ENCODE measurements at regions of chr10 and their contacts with region 1.

Region 1: GRCh38 chr10:32346134-32346550 is 816 bp downstream of the EPC1 start:
- DNase-seq: peak; percentile 97 to 98 (median 98)
- H3K4me3 ChIP-seq: peak overlapping the region; percentile 82 to 100
- H3K4me3 Mint-ChIP-seq: peak overlapping the region; percentile 90 to 98 (median 94)
- H3K27ac ChIP-seq: peak overlapping the region; percentile 100
- H3K27ac Mint-ChIP-seq: peak overlapping the region; percentile 99 to 100 (median 99)
- H3K4me1 ChIP-seq: peaks cover 78% of the 10 kb centered on the region
- H3K4me1 Mint-ChIP-seq: peaks cover 48 to 86% (median 65%) of the 10 kb centered on the region in 4 donors
- H3K27me3 ChIP-seq: no peaks in the 10 kb centered on the region
- H3K27me3 Mint-ChIP-seq: no peaks in the 10 kb centered on the region

Region 2: GRCh38 chr10:32055813-32056600 is 290.1 kb before region 1 on chr10 and contains the start of gene KIF5B:
- CTCF ChIA-PET with region 1: no interaction called
- POLR2A ChIA-PET with region 1: interaction called, 4 read pairs
- intact Hi-C with region 1: loop called (anchors 5 kb)
- DNase-seq: peak; percentile 81 to 92 (median 88)
- H3K4me3 ChIP-seq: peak within 1 kb of the TSS; percentile 88 to 93
- H3K4me3 Mint-ChIP-seq: peak within 1 kb of the TSS; percentile 95 to 99 (median 98)
- H3K27ac ChIP-seq: peak within 1 kb of the TSS; percentile 81
- H3K27ac Mint-ChIP-seq: peak within 1 kb of the TSS; percentile 94 to 97 (median 95)
- H3K4me1 ChIP-seq: peaks cover 49% of the 10 kb centered on the region
- H3K4me1 Mint-ChIP-seq: peaks cover 30 to 54% (median 44%) of the 10 kb centered on the region in 4 donors
- H3K27me3 ChIP-seq: no peaks in the 10 kb centered on the region
- H3K27me3 Mint-ChIP-seq: no peaks in the 10 kb centered on the region
- total RNA-seq, gene KIF5B: 54.8 to 55.6 TPM

Region 3: GRCh38 chr10:32295027-32295426 is 51.1 kb before region 1 on chr10:
- CTCF ChIA-PET with region 1: interaction called, 14 read pairs
- POLR2A ChIA-PET with region 1: interaction called, 6 read pairs
- intact Hi-C with region 1: no loop called
- DNase-seq: no peak
- H3K4me3 ChIP-seq: no peak overlapping the region
- H3K4me3 Mint-ChIP-seq: no peak overlapping the region
- H3K27ac ChIP-seq: peak overlapping the region; percentile 19
- H3K27ac Mint-ChIP-seq: peak overlapping the region in 5 of 7 donors; percentile 33 to 80 (median 62)
- H3K4me1 ChIP-seq: peaks cover 50% of the 10 kb centered on the region
- H3K4me1 Mint-ChIP-seq: peaks cover 34 to 61% (median 42%) of the 10 kb centered on the region in 4 donors
- H3K27me3 ChIP-seq: no peaks in the 10 kb centered on the region
- H3K27me3 Mint-ChIP-seq: no peaks in the 10 kb centered on the region

Region 4: GRCh38 chr10:32357056-32357735 is 11.1 kb after region 1 on chr10:
- CTCF ChIA-PET with region 1: interaction called, 5 read pairs
- POLR2A ChIA-PET with region 1: interaction called, 63 read pairs
- intact Hi-C with region 1: no loop called
- DNase-seq: peak; percentile 52 to 71 (median 64)
- H3K4me3 ChIP-seq: no peak overlapping the region
- H3K4me3 Mint-ChIP-seq: peak overlapping the region; percentile 12 to 81 (median 72)
- H3K27ac ChIP-seq: peak overlapping the region; percentile 46
- H3K27ac Mint-ChIP-seq: peak overlapping the region; percentile 79 to 94 (median 88)
- H3K4me1 ChIP-seq: peaks cover 90% of the 10 kb centered on the region
- H3K4me1 Mint-ChIP-seq: peaks cover 57 to 89% (median 70%) of the 10 kb centered on the region in 4 donors
- H3K27me3 ChIP-seq: no peaks in the 10 kb centered on the region
- H3K27me3 Mint-ChIP-seq: no peaks in the 10 kb centered on the region

Region 5: GRCh38 chr10:32433542-32433941 is 87.4 kb after region 1 on chr10:
- CTCF ChIA-PET with region 1: no interaction called
- POLR2A ChIA-PET with region 1: no interaction called
- intact Hi-C with region 1: no loop called
- DNase-seq: no peak
- H3K4me3 ChIP-seq: no peak overlapping the region
- H3K4me3 Mint-ChIP-seq: no peak overlapping the region
- H3K27ac ChIP-seq: no peak overlapping the region
- H3K27ac Mint-ChIP-seq: no peak overlapping the region
- H3K4me1 ChIP-seq: no peaks in the 10 kb centered on the region
- H3K4me1 Mint-ChIP-seq: peaks cover 3 to 6% (median 4%) of the 10 kb centered on the region in 4 donors
- H3K27me3 ChIP-seq: no peaks in the 10 kb centered on the region
- H3K27me3 Mint-ChIP-seq: peaks cover 0 to 5% of the 10 kb centered on the region in 2 donors

Region 6: DNA sequence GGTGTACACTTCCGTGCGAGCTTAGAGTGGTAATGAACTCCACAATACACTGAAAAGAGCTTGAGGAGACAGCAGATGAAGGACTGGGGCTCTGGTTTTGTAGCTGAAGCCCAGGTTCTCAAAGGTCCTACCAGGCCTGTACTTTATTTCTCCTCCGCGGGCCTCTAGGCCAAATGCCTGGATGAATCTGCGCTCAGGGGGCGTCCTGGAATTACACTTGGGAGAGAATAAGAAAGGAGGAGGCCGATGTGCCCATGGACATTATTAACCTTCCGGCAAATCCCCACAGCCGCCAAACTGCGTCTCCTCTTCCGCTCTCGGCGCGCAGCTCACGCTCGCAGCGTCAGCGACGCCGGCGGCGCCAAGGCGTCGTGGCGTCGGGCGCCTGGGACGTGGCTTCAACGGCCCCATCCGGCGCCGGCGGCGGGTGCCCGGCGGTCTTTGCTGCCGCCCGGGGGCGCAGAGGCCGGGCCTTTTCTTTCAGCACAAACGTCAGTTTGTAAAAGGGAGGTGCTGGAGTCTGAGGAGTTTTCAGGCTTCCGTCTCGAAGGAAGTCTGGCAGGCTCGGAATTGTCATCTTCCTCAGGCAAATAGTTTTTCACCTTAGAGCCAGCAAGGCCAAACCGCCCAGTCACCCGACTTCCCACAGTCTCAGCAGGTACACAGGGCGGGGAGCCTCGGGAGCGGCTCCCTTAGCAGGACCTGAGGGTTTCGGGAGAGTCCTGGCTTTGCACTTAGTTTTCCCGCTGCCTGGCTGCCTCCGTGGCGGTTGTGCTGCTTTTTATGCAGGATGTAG is 99.8 kb after region 1 on chr10 and contains the start of gene CCDC7:
- CTCF ChIA-PET with region 1: no interaction called
- POLR2A ChIA-PET with region 1: interaction called, 9 read pairs
- intact Hi-C with region 1: loop called (anchors 1 kb)
- DNase-seq: peak; percentile 83 to 90 (median 88)
- H3K4me3 ChIP-seq: peak within 1 kb of the TSS; percentile 89 to 92
- H3K4me3 Mint-ChIP-seq: peak within 1 kb of the TSS; percentile 91 to 99 (median 96)
- H3K27ac ChIP-seq: peak within 1 kb of the TSS; percentile 81
- H3K27ac Mint-ChIP-seq: peak within 1 kb of the TSS; percentile 97 to 100 (median 98)
- H3K4me1 ChIP-seq: peaks cover 20% of the 10 kb centered on the region
- H3K4me1 Mint-ChIP-seq: peaks cover 8 to 26% (median 16%) of the 10 kb centered on the region in 4 donors
- H3K27me3 ChIP-seq: no peaks in the 10 kb centered on the region
- H3K27me3 Mint-ChIP-seq: no peaks in the 10 kb centered on the region
- total RNA-seq, gene CCDC7: 70.3 to 90.5 TPM

Measured in CD4-positive, alpha-beta memory T cell (primary cell).